Activated CD4-positive, alpha-beta T cell treated with anti-CD3 and anti-CD28 coated beads, Interleukin-2, amount 10 ng/mL, durations not matched to agents 24 days and 14 days (primary cell): ENCODE measurements at regions of chr11 and their contacts with region 1.

Region 1: DNA sequence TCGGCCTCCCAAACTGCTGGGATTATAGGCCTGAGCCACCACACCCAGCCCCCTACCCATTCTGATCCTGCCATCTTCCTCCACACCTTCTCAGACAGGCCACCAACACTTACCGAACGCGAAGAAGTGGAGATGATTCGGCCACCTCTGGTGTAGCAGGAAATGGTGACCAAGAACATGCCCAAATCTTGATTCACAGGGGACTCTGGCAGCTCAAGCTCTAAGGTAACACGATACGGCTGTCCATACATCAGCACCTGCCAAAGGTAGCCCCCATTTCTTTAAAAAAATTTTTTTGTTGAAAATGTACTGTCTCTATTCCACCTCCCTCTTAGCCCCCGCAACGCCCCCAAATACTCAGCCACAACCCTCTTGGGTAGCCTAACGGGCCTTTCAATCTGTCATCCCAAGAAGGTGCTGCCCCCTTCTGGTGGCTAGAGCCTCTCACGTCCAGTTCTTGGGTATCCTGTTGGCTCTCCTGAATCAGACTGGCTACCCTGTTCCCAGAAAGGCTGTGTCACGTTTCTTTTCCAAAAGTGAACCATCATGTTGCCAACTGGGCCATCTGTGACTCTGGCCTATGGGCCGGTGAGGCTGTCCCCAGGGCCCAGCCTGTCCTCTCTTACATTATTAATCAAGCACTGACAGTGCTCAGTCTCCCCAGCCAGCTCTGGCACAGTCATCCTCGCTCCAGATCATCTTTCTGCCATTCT is 5.3 kb upstream of the LRRN4CL start:
- DNase-seq: peak; percentile 93
- H3K4me3 Mint-ChIP-seq: no peak overlapping the region
- H3K27ac Mint-ChIP-seq: peak overlapping the region; percentile 68
- H3K4me1 Mint-ChIP-seq: peaks cover 7% of the 10 kb centered on the region
- H3K27me3 Mint-ChIP-seq: no peaks in the 10 kb centered on the region

Region 2: DNA sequence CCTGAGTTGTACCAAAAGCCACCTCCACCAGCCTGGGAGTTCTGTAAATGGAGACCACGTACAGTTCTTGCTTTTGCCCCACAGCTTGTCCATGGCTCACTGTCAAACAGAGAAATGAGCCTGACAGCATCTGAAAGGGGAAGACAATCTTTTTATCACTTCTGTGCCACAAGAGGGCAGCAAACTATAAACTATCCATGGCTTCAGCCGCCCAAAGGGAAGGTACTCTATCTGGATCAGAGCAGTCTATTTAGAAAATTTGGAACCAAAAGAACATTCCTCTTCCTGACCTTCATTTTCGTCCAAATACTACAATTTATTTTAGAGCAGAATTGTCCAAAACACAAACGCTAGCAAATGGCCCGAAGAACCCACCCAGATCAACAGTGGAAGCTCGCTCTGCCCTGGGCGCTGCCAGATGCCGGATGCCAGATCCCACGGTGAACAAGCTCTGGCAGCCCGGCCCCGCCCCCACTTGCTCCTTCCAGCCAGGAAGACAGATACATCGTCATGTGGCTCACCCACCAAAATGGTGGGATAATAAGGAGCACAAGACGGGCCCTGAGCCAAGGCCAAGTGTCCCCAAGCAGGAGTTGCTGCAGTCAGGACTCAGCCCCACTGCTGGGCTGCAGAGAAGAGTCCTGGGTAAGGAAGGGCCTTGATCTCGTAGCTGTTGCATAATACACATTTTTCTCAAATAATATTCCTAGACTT is 299.6 kb before region 1 on chr11:
- intact Hi-C with region 1: loop called (anchors 5 kb)
- DNase-seq: peak; percentile 88
- H3K4me3 Mint-ChIP-seq: no peak overlapping the region
- H3K27ac Mint-ChIP-seq: no peak overlapping the region
- H3K4me1 Mint-ChIP-seq: peaks cover 21% of the 10 kb centered on the region
- H3K27me3 Mint-ChIP-seq: peaks cover under 1% of the 10 kb centered on the region

Region 3: GRCh38 chr11:62472012-62472884 is 222.4 kb before region 1 on chr11:
- intact Hi-C with region 1: no loop called
- DNase-seq: no peak
- H3K4me3 Mint-ChIP-seq: no peak overlapping the region
- H3K27ac Mint-ChIP-seq: no peak overlapping the region
- H3K4me1 Mint-ChIP-seq: peaks cover 7% of the 10 kb centered on the region
- H3K27me3 Mint-ChIP-seq: no peaks in the 10 kb centered on the region

Region 4: GRCh38 chr11:62896049-62896448 is 201.4 kb after region 1 on chr11:
- intact Hi-C with region 1: no loop called
- DNase-seq: no peak
- H3K4me3 Mint-ChIP-seq: no peak overlapping the region
- H3K27ac Mint-ChIP-seq: no peak overlapping the region
- H3K4me1 Mint-ChIP-seq: peaks cover 3% of the 10 kb centered on the region
- H3K27me3 Mint-ChIP-seq: peaks cover 12% of the 10 kb centered on the region